H1 (cell line): ENCODE measurements at regions of chr7 and their contacts with region 1.

Region 1: DNA sequence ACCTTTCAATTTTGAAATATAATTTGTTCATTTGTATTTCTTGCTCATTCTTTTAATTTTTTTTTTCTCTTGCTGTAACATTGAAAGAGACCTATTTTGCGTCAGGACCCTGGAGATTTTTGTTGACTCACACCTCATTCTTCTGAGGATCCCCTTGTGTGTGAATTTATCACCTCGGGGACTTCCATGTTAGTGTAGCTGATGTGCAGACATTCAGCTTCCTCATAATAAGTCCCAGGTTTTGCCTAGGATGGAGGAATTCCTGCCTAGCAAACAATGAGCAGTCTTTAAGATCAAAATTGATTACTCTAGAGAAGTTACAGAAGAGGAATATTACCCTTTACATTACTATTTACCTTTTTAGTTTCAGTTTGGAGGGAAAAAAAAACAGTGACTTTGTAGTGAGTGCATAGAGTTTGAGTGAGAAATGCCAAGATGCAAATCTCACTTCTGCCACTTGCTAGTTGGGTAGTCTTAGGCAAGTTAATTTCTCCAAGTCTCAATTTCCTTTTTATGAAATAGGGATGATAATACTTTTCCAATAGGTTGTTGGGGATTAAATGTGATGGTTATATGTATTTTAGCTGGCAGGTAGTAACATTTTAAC is 14.3 kb downstream of the TES start:
- DNase-seq: no peak
- H3K4me3 ChIP-seq: no peak overlapping the region
- H3K27ac ChIP-seq: no peak overlapping the region
- H3K4me1 ChIP-seq: no peaks in the 10 kb centered on the region
- H3K27me3 ChIP-seq: no peaks in the 10 kb centered on the region
- CTCF ChIP-seq: no peak
- EP300 ChIP-seq: no peak
- POLR2A ChIP-seq: no peak
- RAD21 ChIP-seq: no peak

Region 2: DNA sequence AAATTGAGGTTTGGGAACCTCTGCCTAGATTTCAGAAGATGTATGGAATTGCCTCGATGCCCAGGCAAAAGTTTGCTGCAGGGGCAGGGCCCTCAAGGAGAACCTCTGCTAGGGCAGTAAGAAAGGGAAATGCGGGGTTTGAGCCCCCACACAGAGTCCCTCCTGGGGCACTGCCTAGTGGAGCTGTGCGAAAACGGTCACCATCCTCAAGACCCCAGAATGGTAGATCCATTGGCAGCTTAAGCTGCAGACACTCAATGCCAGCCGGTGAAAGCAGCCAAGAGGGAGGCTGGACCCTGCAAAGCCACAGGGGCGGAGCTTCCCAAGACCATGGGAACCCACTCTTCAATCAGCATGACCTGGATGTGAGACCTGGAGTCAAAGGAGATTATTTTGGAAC is 179.1 kb before region 1 on chr7:
- CTCF ChIA-PET with region 1: no interaction called
- POLR2A ChIA-PET with region 1: no interaction called
- DNase-seq: no peak
- H3K4me3 ChIP-seq: no peak overlapping the region
- H3K27ac ChIP-seq: no peak overlapping the region
- H3K4me1 ChIP-seq: no peaks in the 10 kb centered on the region
- H3K27me3 ChIP-seq: no peaks in the 10 kb centered on the region
- CTCF ChIP-seq: no peak
- EP300 ChIP-seq: no peak
- POLR2A ChIP-seq: no peak
- RAD21 ChIP-seq: no peak

Region 3: GRCh38 chr7:116211006-116211912 is 13.3 kb before region 1 on chr7:
- CTCF ChIA-PET with region 1: no interaction called
- POLR2A ChIA-PET with region 1: interaction called, 10 read pairs
- DNase-seq: peak; percentile 39 to 61
- H3K4me3 ChIP-seq: peak overlapping the region; percentile 69 to 97 (median 90)
- H3K27ac ChIP-seq: no peak overlapping the region
- H3K4me1 ChIP-seq: peaks cover 0 to 3% (median under 1%) of the 10 kb centered on the region in 4 experiments; a peak in 1 of 7 replicates
- H3K27me3 ChIP-seq: peaks cover 0 to 4% (median under 1%) of the 10 kb centered on the region in 4 experiments; a peak in 3 of 7 replicates
- CTCF ChIP-seq: no peak
- EP300 ChIP-seq: no peak
- POLR2A ChIP-seq: peak in 1 of 2 experiments; percentile 52; a peak in 1 of 3 replicates
- RAD21 ChIP-seq: no peak